CD4-positive, alpha-beta T cell (primary cell): ENCODE measurements at regions of chr7 and their contacts with region 1.

Region 1: DNA sequence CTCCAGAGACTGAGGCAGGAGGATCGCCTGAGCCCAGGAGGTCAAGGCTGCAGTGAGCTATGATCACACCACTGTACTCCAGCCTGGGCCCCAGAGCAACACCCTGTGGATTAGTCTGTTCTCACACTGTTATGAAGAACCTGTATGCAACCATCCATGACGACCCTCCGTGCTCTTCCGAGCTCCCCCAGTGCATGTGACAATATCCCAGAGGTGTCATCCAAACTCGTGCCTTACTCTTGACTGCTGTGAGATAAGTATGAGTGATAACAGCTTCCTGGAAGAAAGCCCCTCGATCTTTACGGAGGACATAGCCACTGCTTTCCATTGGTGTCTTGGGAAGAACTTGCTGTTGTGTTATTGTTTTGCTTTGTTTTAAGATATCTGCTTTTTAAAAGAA is 591.9 kb downstream of the GALNT17 start:
- DNase-seq: no peak
- ATAC-seq: no peak
- H3K4me3 ChIP-seq: no peak overlapping the region
- H3K4me3 Mint-ChIP-seq: no peak overlapping the region
- H3K27ac ChIP-seq: no peak overlapping the region
- H3K27ac Mint-ChIP-seq: no peak overlapping the region
- H3K4me1 ChIP-seq: no peaks in the 10 kb centered on the region
- H3K4me1 Mint-ChIP-seq: no peaks in the 10 kb centered on the region
- H3K27me3 ChIP-seq: no peaks in the 10 kb centered on the region
- H3K27me3 Mint-ChIP-seq: peaks cover 10% of the 10 kb centered on the region
- CTCF ChIP-seq: no peak

Region 2: DNA sequence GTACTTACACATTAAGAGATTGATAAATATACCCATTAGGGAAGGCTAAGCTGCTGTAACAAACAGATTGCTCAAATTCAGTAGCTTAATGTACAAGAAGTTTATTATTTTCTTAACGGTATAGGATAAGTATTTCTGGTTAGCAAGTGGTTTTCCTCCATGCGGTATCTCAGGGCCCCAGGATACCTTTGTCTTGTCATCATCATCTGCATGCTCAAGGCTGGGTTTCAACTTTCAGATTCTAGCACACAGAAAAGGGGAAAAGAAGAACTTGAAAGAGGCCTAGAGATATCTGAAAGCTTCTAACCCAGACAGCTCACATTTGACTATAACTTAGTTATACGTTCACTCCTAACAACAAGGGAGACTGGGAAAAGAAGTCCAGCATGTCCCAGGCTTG is 603.8 kb before region 1 on chr7:
- CTCF ChIA-PET with region 1: no interaction called
- POLR2A ChIA-PET with region 1: no interaction called
- intact Hi-C with region 1: no loop called
- DNase-seq: no peak
- ATAC-seq: no peak
- H3K4me3 ChIP-seq: no peak overlapping the region
- H3K4me3 Mint-ChIP-seq: no peak overlapping the region
- H3K27ac ChIP-seq: no peak overlapping the region
- H3K27ac Mint-ChIP-seq: no peak overlapping the region
- H3K4me1 ChIP-seq: no peaks in the 10 kb centered on the region
- H3K4me1 Mint-ChIP-seq: no peaks in the 10 kb centered on the region
- H3K27me3 ChIP-seq: no peaks in the 10 kb centered on the region
- H3K27me3 Mint-ChIP-seq: no peaks in the 10 kb centered on the region
- CTCF ChIP-seq: no peak

Region 3: DNA sequence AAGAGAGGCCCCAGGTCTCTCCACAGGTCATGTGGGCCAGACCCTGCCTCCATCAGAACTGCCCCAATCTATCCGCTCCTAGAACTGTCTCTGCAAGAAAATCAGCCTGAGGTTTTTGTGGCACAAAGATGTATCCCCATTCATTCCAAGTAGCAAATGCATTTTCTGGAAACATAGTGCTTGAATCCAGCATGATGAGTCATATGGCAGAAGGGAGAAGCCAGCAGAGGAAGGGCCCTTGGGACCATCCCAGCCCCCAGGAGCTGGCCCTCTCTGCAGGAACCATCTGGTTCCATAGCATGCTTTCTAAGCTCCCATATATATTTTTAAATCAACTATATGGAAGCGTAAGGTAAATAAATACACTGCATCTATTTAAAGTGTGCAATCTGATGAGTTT is 28.7 kb before region 1 on chr7:
- CTCF ChIA-PET with region 1: no interaction called
- POLR2A ChIA-PET with region 1: no interaction called
- intact Hi-C with region 1: loop called in 1 of 2 experiments (anchors 2 kb)
- DNase-seq: no peak
- ATAC-seq: no peak
- H3K4me3 ChIP-seq: no peak overlapping the region
- H3K4me3 Mint-ChIP-seq: no peak overlapping the region
- H3K27ac ChIP-seq: no peak overlapping the region
- H3K27ac Mint-ChIP-seq: no peak overlapping the region
- H3K4me1 ChIP-seq: no peaks in the 10 kb centered on the region
- H3K4me1 Mint-ChIP-seq: no peaks in the 10 kb centered on the region
- H3K27me3 ChIP-seq: no peaks in the 10 kb centered on the region
- H3K27me3 Mint-ChIP-seq: no peaks in the 10 kb centered on the region
- CTCF ChIP-seq: no peak